Activated CD8-positive, alpha-beta T cell treated with anti-CD3 and anti-CD28 coated beads, Interleukin-2, amount 10 ng/mL, durations not matched to agents 7 days and 5 days (primary cell): ENCODE measurements at regions of chr11 and their contacts with region 1.

Region 1: GRCh38 chr11:4072668-4073285 is 21.8 kb upstream of the RRM1 start:
- DNase-seq: peak; percentile 68
- ATAC-seq: peak; percentile 71
- H3K4me3 Mint-ChIP-seq: no peak overlapping the region
- H3K27ac Mint-ChIP-seq: no peak overlapping the region
- H3K4me1 Mint-ChIP-seq: peaks cover 25% of the 10 kb centered on the region
- H3K27me3 Mint-ChIP-seq: no peaks in the 10 kb centered on the region

Region 2: DNA sequence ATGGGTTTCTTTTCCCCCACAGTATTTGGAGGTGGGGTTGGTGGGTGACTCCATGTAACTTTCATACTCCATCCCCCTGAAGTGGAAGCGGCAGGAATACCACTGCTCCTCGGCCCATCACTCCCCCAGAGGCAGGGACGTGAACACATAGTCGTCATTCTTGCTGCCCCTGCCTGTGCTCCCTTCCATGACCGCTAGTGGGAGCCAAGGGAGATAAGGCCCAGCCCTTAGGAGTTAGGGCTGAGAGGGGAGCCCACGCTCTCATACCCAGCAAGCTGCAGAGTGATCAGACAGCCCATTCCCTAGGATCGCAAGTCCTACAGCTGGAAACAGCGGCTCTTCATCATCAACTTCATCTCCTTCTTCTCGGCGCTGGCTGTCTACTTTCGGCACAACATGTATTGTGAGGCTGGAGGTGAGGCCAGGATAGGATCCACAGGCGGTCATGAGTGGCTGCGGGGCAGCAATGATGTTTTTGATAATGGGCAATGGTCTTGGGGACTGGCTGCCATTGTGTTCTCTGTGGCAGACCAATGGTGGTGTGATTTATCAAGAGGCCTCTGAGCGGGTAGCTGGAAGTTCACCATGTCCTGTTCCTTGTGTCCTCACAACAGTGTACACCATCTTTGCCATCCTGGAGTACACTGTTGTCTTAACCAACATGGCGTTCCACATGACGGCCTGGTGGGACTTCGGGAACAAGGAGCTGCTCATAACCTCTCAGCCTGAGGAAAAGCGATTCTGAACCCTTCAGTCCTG is 247.9 kb before region 1 on chr11:
- CTCF ChIA-PET with region 1: interaction called, 14 read pairs
- POLR2A ChIA-PET with region 1: interaction called, 3 read pairs
- DNase-seq: peak; percentile 87
- ATAC-seq: peak; percentile 93
- H3K4me3 Mint-ChIP-seq: no peak overlapping the region
- H3K27ac Mint-ChIP-seq: peak overlapping the region; percentile 46
- H3K4me1 Mint-ChIP-seq: peaks cover 38% of the 10 kb centered on the region
- H3K27me3 Mint-ChIP-seq: no peaks in the 10 kb centered on the region

Region 3: DNA sequence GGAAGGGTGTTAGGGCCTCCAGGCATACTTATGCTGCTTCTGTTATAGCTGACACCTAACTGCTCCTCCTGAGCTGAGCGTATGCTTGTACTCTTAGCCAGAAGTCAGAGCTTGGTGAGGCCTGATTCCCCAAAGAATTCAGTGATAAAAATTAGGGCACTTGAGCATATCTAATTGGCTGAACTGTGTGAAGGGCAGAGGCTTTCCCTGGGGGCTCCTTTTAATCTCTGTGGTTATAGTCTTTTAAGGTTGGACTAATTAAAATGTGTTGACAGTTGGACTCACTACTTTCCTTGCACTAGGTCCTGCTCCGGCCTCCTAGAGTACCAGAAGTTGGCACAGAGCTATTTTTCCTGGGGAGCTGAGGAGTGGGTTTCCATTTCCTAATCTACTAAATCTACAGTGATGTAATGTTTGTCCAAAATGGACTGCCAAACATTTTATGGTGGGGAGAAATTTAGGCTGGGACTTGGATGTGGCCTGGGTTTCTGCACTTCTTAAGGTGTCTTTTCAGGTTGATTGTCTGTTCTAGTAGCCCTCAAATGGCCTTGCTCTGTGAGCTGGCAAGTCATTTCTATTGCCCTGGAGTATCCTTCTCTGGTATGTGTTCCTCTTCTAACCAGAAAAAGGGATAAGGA is 198.9 kb before region 1 on chr11:
- CTCF ChIA-PET with region 1: interaction called, 23 read pairs
- POLR2A ChIA-PET with region 1: no interaction called
- DNase-seq: no peak
- ATAC-seq: no peak
- H3K4me3 Mint-ChIP-seq: no peak overlapping the region
- H3K27ac Mint-ChIP-seq: no peak overlapping the region
- H3K4me1 Mint-ChIP-seq: peaks cover 72% of the 10 kb centered on the region
- H3K27me3 Mint-ChIP-seq: no peaks in the 10 kb centered on the region

Region 4: DNA sequence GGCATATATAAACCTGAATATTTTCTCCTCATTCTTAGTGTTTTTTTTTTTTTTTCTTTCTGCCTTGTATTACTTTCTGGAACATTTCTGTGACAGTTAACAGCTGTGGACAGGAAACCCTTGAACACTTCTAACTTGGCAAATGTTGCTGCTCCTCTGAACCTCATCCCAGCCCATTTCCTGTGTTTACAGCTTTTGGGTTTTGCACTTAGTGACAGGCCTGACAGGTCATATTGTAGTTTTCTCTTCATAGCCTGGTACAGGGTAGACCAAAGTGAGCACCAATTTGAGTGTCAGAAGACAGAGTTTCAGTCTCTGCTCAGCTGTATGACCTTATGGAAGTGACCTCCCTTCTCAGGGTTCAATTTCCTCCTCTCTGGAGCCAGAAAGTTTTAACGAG is 125.7 kb before region 1 on chr11:
- CTCF ChIA-PET with region 1: interaction called, 59 read pairs
- POLR2A ChIA-PET with region 1: no interaction called
- DNase-seq: peak; percentile 83
- ATAC-seq: peak; percentile 76
- H3K4me3 Mint-ChIP-seq: peak overlapping the region; percentile 69
- H3K27ac Mint-ChIP-seq: peak overlapping the region; percentile 96
- H3K4me1 Mint-ChIP-seq: peaks cover 93% of the 10 kb centered on the region
- H3K27me3 Mint-ChIP-seq: no peaks in the 10 kb centered on the region

Region 5: GRCh38 chr11:4035985-4036384 is 36.8 kb before region 1 on chr11:
- CTCF ChIA-PET with region 1: interaction called, 10 read pairs
- POLR2A ChIA-PET with region 1: no interaction called
- DNase-seq: no peak
- ATAC-seq: no peak
- H3K4me3 Mint-ChIP-seq: no peak overlapping the region
- H3K27ac Mint-ChIP-seq: no peak overlapping the region
- H3K4me1 Mint-ChIP-seq: peaks cover 16% of the 10 kb centered on the region
- H3K27me3 Mint-ChIP-seq: no peaks in the 10 kb centered on the region

Region 6: GRCh38 chr11:4094348-4095291 is 21.8 kb after region 1 on chr11 and contains the start of gene RRM1:
- CTCF ChIA-PET with region 1: interaction called, 15 read pairs
- POLR2A ChIA-PET with region 1: interaction called, 3 read pairs
- DNase-seq: peak; percentile 96
- ATAC-seq: peak; percentile 93
- H3K4me3 Mint-ChIP-seq: peak within 1 kb of the TSS; percentile 88
- H3K27ac Mint-ChIP-seq: peak within 1 kb of the TSS; percentile 95
- H3K4me1 Mint-ChIP-seq: peaks cover 74% of the 10 kb centered on the region
- H3K27me3 Mint-ChIP-seq: no peaks in the 10 kb centered on the region
- total RNA-seq, gene RRM1: 180 to 183 TPM